ENCODE measurements at regions of chr17 and their contacts with region 1.

Region 1: DNA sequence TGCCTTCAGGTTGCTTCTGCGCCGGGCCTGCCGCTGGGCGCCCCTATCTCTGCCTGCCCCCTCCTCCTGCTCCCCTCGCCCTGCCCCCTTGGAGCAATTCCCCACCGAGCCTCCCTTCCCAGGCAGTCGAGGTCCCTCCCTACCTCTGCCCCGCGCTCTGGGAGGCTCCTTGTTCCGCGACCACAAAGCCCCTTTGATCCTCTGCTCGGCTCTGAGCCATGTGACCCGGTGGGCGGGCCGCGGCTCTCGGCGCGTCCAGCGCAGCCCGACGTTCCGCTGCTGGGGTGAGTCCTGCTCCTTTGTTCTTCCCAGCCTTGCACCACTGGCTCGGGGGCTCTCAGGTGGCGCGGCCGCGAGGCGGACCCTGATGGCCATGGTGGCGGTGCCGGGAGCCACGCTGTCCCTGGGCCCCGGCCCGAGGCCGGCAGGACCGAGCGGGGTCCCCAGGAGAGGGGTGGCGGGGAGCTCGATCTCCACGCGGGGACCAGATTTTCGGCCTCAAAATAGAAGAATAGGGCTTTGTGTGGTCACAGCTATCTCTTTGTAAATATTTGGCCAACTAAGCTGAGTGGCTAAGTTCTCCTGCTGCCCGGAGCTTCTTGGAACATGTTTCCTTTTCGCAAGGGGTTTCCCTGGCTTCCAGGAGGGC is 310.6 kb downstream of the SEC14L1 start:
- DNase-seq: peak; percentile 96
- ATAC-seq: peak; percentile 77
- H3K4me3 ChIP-seq: peak overlapping the region; percentile 61 to 91 (median 73)
- H3K27ac ChIP-seq: peak overlapping the region; percentile 95
- H3K4me1 ChIP-seq: peaks cover 59% of the 10 kb centered on the region
- H3K27me3 ChIP-seq: no peaks in the 10 kb centered on the region; a peak in 1 of 5 replicates
- CTCF ChIP-seq: peak; percentile 21; the same call in 1 of the 2 replicates
- EP300 ChIP-seq: peak in 1 of 2 experiments; percentile 71; a peak in 2 of 4 replicates
- POLR2A ChIP-seq: peak in 1 of 2 experiments; percentile 50; a peak in 1 of 4 replicates
- RAD21 ChIP-seq: peak; percentile 13; the same call in 1 of the 2 replicates

Region 2: GRCh38 chr17:77297693-77298666 is 153.4 kb before region 1 on chr17:
- CTCF ChIA-PET with region 1: no interaction called
- POLR2A ChIA-PET with region 1: interaction called, 16 read pairs
- in situ Hi-C with region 1: no loop called
- intact Hi-C with region 1: no loop called
- DNase-seq: no peak
- ATAC-seq: no peak
- H3K4me3 ChIP-seq: no peak overlapping the region
- H3K27ac ChIP-seq: peak overlapping the region; percentile 50
- H3K4me1 ChIP-seq: peaks cover 81% of the 10 kb centered on the region
- H3K27me3 ChIP-seq: no peaks in the 10 kb centered on the region
- CTCF ChIP-seq: no peak
- EP300 ChIP-seq: no peak
- POLR2A ChIP-seq: 0 out of 4 replicates have a peak, but pooled peaks of 1 of the 2 experiments have one; percentile 13
- RAD21 ChIP-seq: no peak

Region 3: GRCh38 chr17:77391668-77392375 is 59.5 kb before region 1 on chr17:
- CTCF ChIA-PET with region 1: no interaction called
- POLR2A ChIA-PET with region 1: interaction called, 129 read pairs
- in situ Hi-C with region 1: no loop called
- intact Hi-C with region 1: no loop called
- DNase-seq: no peak
- ATAC-seq: peak; percentile 7
- H3K4me3 ChIP-seq: peak overlapping the region; percentile 25 to 62 (median 34)
- H3K27ac ChIP-seq: peak overlapping the region; percentile 91
- H3K4me1 ChIP-seq: peaks cover 90% of the 10 kb centered on the region
- H3K27me3 ChIP-seq: no peaks in the 10 kb centered on the region
- CTCF ChIP-seq: no peak
- EP300 ChIP-seq: no peak
- POLR2A ChIP-seq: no peak
- RAD21 ChIP-seq: no peak

Region 4: GRCh38 chr17:77437017-77437416 is 14.4 kb before region 1 on chr17:
- CTCF ChIA-PET with region 1: no interaction called
- POLR2A ChIA-PET with region 1: interaction called, 11 read pairs
- in situ Hi-C with region 1: no loop called
- intact Hi-C with region 1: no loop called
- DNase-seq: no peak
- ATAC-seq: no peak
- H3K4me3 ChIP-seq: no peak overlapping the region
- H3K27ac ChIP-seq: no peak overlapping the region
- H3K4me1 ChIP-seq: no peaks in the 10 kb centered on the region
- H3K27me3 ChIP-seq: no peaks in the 10 kb centered on the region
- CTCF ChIP-seq: no peak
- EP300 ChIP-seq: no peak
- POLR2A ChIP-seq: no peak
- RAD21 ChIP-seq: no peak

Region 5: GRCh38 chr17:77520936-77521475 is 69.6 kb after region 1 on chr17:
- CTCF ChIA-PET with region 1: no interaction called
- POLR2A ChIA-PET with region 1: no interaction called
- in situ Hi-C with region 1: no loop called
- intact Hi-C with region 1: no loop called
- DNase-seq: no peak
- ATAC-seq: peak; percentile 25; the same call in 1 of the 3 replicates
- H3K4me3 ChIP-seq: no peak overlapping the region
- H3K27ac ChIP-seq: no peak overlapping the region
- H3K4me1 ChIP-seq: 0 out of 2 replicates have a peak, but pooled peaks cover 5% of the 10 kb centered on the region
- H3K27me3 ChIP-seq: peaks cover 3 to 21% of the 10 kb centered on the region in 2 experiments; a peak in 4 of 5 replicates
- CTCF ChIP-seq: no peak
- EP300 ChIP-seq: no peak
- POLR2A ChIP-seq: no peak
- RAD21 ChIP-seq: no peak

Region 6: GRCh38 chr17:77581480-77581879 is 130.1 kb after region 1 on chr17:
- CTCF ChIA-PET with region 1: no interaction called
- POLR2A ChIA-PET with region 1: no interaction called
- in situ Hi-C with region 1: no loop called
- intact Hi-C with region 1: no loop called
- DNase-seq: no peak
- ATAC-seq: no peak
- H3K4me3 ChIP-seq: no peak overlapping the region
- H3K27ac ChIP-seq: no peak overlapping the region
- H3K4me1 ChIP-seq: no peaks in the 10 kb centered on the region
- H3K27me3 ChIP-seq: peaks cover 6 to 50% of the 10 kb centered on the region in 2 experiments; a peak in 4 of 5 replicates
- CTCF ChIP-seq: no peak
- EP300 ChIP-seq: no peak
- POLR2A ChIP-seq: no peak
- RAD21 ChIP-seq: no peak

Region 7: DNA sequence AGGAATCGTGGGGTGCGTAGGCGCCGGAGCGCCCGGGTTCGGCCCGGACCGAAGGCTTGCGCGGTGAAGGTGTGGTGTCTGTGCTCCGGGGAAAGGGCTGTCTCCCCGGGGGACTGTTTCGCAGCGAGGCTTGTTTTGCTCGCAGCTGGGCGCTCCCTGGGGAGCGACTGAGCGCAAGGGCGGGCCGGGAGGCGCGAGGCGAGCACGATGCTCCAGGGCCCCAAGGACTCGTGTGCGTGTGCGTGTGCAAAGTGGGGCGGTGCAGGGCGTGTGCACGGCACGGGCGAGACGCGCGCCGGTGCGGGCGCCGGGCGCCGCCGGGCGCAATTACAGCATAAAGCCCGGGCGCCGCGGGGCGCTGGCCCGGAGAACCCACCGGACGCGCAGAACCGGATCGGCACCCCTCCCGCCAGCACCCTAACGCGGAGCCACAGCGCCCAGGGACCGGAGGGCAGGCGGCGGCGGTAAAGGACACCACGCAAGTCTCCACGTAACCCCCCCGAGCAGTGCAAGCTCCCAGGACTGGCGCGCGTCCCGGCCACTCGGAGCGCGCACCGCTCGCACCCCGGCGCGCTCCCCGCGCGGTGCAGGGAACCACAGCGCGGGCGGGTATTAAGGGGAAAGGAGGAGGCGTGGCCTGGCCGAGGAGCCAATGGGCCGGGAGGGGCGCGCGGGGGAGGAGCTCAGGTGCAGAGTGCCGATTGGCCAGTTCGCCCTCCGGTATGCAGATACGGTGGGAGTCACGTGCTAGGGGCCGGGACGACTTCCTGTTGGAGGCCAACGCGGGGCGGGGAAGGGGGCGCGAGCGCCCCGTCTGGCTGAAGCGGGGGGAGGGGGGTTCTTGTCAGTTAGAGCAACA is 506.7 kb after region 1 on chr17 and contains the start of gene TNRC6C:
- CTCF ChIA-PET with region 1: no interaction called
- POLR2A ChIA-PET with region 1: interaction called, 13 read pairs
- in situ Hi-C with region 1: no loop called
- intact Hi-C with region 1: no loop called
- DNase-seq: peak; percentile 98
- ATAC-seq: peak; percentile 92
- H3K4me3 ChIP-seq: peak within 1 kb of the TSS; percentile 81 to 86 (median 85)
- H3K27ac ChIP-seq: no peak within 1 kb of the TSS
- H3K4me1 ChIP-seq: peaks cover 43% of the 10 kb centered on the region
- H3K27me3 ChIP-seq: peaks cover 6 to 47% of the 10 kb centered on the region in 2 experiments
- CTCF ChIP-seq: peak; percentile 60
- EP300 ChIP-seq: peak in 1 of 2 experiments; percentile 52; a peak in 2 of 4 replicates
- POLR2A ChIP-seq: peak; percentile 99 to 100
- RAD21 ChIP-seq: peak; percentile 75
- total RNA-seq, gene TNRC6C: 4.7 and 4.9 TPM in 2 replicates